Caco-2 (cell line): ENCODE measurements at regions of chr16 and their contacts with region 1.

Region 1: GRCh38 chr16:10587622-10588021 is 7.2 kb upstream of the EMP2 start:
- DNase-seq: no peak
- H3K4me3 ChIP-seq: no peak overlapping the region
- H3K4me3 Mint-ChIP-seq: no peak overlapping the region
- H3K27ac Mint-ChIP-seq: peak overlapping the region; percentile 67
- H3K4me1 ChIP-seq: peaks cover 43% of the 10 kb centered on the region
- H3K4me1 Mint-ChIP-seq: peaks cover 43% of the 10 kb centered on the region
- H3K27me3 ChIP-seq: no peaks in the 10 kb centered on the region
- H3K27me3 Mint-ChIP-seq: no peaks in the 10 kb centered on the region
- CTCF ChIP-seq: no peak

Region 2: DNA sequence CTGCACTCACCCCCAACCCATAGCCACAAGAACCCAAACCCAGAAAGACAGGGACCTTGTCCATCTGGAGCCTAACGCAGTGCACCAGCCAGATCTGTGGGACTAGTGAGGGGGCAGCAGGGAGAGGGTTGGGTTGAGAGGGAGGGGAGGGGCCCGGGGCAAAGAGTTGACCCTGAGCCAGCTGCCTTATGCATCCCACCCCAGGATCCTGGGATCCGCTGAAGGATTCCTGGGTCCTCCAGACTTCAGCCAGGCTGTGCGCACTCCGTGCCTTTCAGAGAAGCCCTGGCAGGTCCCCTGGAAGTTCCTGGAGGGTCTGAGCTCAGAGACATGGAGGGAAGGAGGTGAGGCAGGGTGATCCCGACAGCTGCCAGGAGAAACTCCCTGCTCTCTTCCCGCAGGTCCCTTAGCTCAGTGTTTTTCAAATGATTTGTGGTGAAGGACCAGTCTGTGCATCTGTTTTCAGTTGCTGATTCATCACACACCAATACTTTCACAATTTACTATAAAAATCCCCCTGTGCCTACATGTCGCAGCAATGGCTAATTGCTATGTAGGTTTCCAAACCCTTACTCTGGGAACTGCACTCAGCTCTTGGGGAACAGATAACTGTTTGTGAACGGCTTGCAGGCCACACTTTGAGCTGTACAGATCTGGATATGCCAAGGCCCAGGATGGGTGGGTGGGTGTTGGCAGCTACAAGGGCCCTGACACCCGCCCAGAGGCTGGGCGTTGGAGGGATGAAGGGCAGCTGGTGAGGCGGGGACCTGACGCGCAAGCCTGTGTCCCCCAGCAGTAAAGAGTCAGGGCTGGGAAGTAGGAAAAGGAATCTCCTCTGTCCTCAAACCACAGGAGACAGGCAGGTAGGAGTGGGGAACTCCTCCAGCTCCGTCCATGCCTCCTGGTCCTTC is 13.2 kb after region 1 on chr16:
- CTCF ChIA-PET with region 1: no interaction called
- POLR2A ChIA-PET with region 1: no interaction called
- intact Hi-C with region 1: loop called (anchors 2 kb)
- DNase-seq: no peak
- H3K4me3 ChIP-seq: no peak overlapping the region
- H3K4me3 Mint-ChIP-seq: no peak overlapping the region
- H3K27ac Mint-ChIP-seq: peak overlapping the region; percentile 98
- H3K4me1 ChIP-seq: peaks cover 30% of the 10 kb centered on the region
- H3K4me1 Mint-ChIP-seq: peaks cover 24% of the 10 kb centered on the region
- H3K27me3 ChIP-seq: no peaks in the 10 kb centered on the region
- H3K27me3 Mint-ChIP-seq: no peaks in the 10 kb centered on the region
- CTCF ChIP-seq: no peak

Region 3: DNA sequence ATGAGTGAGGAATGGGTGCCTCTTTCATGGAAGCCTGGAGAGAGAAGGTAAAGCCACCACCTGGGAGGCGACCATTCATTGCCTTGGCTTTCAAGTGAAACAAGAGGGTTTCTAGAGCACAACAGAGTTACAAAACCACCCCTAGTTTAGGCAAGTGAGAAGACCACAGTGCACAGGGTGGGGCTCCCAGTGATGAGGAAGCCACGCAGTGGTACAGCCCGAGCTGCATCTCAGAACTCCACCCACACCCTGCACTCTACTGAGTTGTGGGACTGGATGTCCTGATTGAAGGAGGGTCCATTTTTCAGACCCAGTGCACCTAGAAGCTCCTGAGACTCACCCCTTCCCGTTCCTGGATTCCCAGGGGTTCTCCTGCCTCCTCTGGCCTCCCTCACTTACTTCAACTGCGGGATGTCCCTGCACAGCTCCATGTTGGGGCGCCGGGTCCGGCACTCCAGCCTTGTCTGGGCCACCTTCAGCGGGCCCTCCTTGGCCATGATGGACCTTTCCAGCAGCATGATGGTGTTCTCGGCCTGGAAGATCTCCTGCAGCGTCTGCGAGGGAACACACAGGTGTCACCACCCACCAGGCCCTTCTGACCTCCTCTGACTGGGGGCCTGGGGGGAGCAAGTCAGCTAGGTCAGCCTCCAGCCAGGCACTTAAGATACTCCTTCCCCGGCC is 47.9 kb after region 1 on chr16:
- CTCF ChIA-PET with region 1: no interaction called
- POLR2A ChIA-PET with region 1: no interaction called
- intact Hi-C with region 1: no loop called
- DNase-seq: no peak
- H3K4me3 ChIP-seq: no peak overlapping the region
- H3K4me3 Mint-ChIP-seq: no peak overlapping the region
- H3K27ac Mint-ChIP-seq: peak overlapping the region; percentile 55
- H3K4me1 ChIP-seq: peaks cover 2% of the 10 kb centered on the region; the same call in 1 of the 2 replicates
- H3K4me1 Mint-ChIP-seq: peaks cover 7% of the 10 kb centered on the region
- H3K27me3 ChIP-seq: no peaks in the 10 kb centered on the region
- H3K27me3 Mint-ChIP-seq: no peaks in the 10 kb centered on the region
- CTCF ChIP-seq: no peak